ENCODE measurements at regions of chr4 and their contacts with region 1.

Region 1: DNA sequence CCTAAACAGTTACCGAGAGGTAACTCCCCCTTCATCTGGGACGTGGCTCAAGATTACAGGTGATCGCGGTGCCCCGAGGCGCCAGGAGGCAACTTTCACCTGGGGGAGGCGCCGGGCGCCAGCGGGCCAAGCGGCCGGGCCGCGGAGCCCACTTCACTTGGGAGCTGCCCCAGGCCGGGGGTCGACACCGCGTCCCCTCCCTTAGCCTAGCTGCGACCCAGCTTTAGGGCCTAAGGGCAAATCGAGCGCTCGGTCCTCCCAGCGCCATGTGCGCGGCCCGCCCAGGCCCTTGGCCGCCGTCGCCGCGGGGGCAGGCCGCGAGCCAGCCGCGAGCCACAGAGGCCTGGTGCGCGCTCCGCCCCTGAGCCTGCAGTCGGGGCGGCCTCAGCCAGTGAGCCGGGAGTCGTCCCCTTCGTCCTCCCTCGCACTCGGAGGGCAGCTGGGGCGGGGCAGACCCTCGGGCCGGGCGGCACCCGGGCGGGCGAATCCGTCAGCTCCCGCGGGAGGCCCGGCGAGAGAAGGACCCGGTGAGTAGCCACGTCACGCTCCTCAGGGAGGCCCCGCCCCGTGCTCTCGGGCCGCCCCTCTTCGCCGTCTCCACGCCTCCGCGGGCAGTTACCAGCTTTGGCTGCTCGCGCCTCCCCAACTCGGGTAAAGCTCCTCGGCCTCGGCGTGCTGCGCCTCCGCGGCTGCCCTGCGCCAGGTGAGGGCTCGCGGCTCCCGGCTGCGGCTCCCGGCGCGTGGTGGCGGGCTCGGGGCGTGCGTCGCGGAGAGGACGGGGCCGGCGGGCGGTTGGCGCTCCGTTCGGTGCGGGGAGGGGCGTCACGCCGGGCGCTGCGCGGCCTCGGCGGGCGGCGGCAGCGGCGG is at the start of gene LARP1B:
- DNase-seq: peak; percentile 87 to 95 (median 91)
- ATAC-seq: peak; percentile 90
- H3K4me3 ChIP-seq: peak within 1 kb of the TSS; percentile 55 to 73
- H3K4me3 Mint-ChIP-seq: peak within 1 kb of the TSS; percentile 84
- H3K27ac ChIP-seq: peak within 1 kb of the TSS; percentile 79 to 86
- H3K27ac Mint-ChIP-seq: peak within 1 kb of the TSS; percentile 92
- H3K4me1 ChIP-seq: peaks cover 5% of the 10 kb centered on the region
- H3K4me1 Mint-ChIP-seq: peaks cover 12% of the 10 kb centered on the region
- H3K27me3 ChIP-seq: no peaks in the 10 kb centered on the region
- H3K27me3 Mint-ChIP-seq: no peaks in the 10 kb centered on the region
- CTCF ChIP-seq: no peak
- total RNA-seq, gene LARP1B: 10.0 to 10.1 TPM

Region 2: GRCh38 chr4:127622921-127623656 is 437.8 kb before region 1 on chr4:
- CTCF ChIA-PET with region 1: no interaction called
- POLR2A ChIA-PET with region 1: no interaction called
- intact Hi-C with region 1: no loop called
- DNase-seq: peak in 1 of 9 experiments; percentile 1
- ATAC-seq: no peak
- H3K4me3 ChIP-seq: no peak overlapping the region
- H3K4me3 Mint-ChIP-seq: peak overlapping the region; percentile 49
- H3K27ac ChIP-seq: no peak overlapping the region
- H3K27ac Mint-ChIP-seq: no peak overlapping the region
- H3K4me1 ChIP-seq: no peaks in the 10 kb centered on the region
- H3K4me1 Mint-ChIP-seq: peaks cover 6% of the 10 kb centered on the region
- H3K27me3 ChIP-seq: peaks cover 5 to 8% of the 10 kb centered on the region in 2 experiments
- H3K27me3 Mint-ChIP-seq: peaks cover 46% of the 10 kb centered on the region
- CTCF ChIP-seq: no peak

Region 3: GRCh38 chr4:127880764-127881562 is 180.0 kb before region 1 on chr4 and contains the start of gene PLK4:
- CTCF ChIA-PET with region 1: no interaction called
- POLR2A ChIA-PET with region 1: interaction called, 7 read pairs
- intact Hi-C with region 1: loop called (anchors 1 to 2 kb)
- DNase-seq: peak; percentile 87 to 97 (median 94)
- ATAC-seq: peak; percentile 92
- H3K4me3 ChIP-seq: peak within 1 kb of the TSS; percentile 75 to 84
- H3K4me3 Mint-ChIP-seq: peak within 1 kb of the TSS; percentile 98
- H3K27ac ChIP-seq: peak within 1 kb of the TSS; percentile 71 to 87
- H3K27ac Mint-ChIP-seq: peak within 1 kb of the TSS; percentile 97
- H3K4me1 ChIP-seq: peaks cover 19% of the 10 kb centered on the region
- H3K4me1 Mint-ChIP-seq: peaks cover 23% of the 10 kb centered on the region
- H3K27me3 ChIP-seq: no peaks in the 10 kb centered on the region
- H3K27me3 Mint-ChIP-seq: no peaks in the 10 kb centered on the region
- CTCF ChIP-seq: no peak
- total RNA-seq, gene PLK4: 4.5 to 5.9 TPM

Region 4: DNA sequence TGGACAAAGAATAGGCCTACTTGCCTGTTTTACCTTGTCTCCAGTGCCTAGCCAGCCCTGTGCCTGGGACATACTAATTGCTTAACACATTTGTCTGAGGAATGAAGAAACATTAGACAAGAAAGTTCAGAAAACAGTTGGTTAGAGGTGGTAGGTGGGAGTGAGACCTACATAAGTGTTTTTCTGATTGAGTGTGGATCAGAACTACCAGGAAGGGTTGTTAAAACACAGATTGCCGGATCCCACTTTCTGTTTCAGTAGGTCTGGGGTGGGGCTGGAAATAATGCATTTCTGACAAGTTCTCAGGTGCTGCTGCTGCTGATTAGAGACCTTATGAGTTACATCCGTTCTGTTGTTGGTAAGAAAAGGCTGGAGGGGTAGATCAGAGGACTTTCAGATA is 742.9 kb after region 1 on chr4:
- CTCF ChIA-PET with region 1: no interaction called
- POLR2A ChIA-PET with region 1: no interaction called
- intact Hi-C with region 1: loop called in 1 of 2 experiments (anchors 5 kb)
- DNase-seq: peak in 1 of 9 experiments; percentile 52
- ATAC-seq: no peak
- H3K4me3 ChIP-seq: no peak overlapping the region
- H3K4me3 Mint-ChIP-seq: no peak overlapping the region
- H3K27ac ChIP-seq: peak overlapping the region in 1 of 2 experiments; percentile 58
- H3K27ac Mint-ChIP-seq: no peak overlapping the region
- H3K4me1 ChIP-seq: no peaks in the 10 kb centered on the region
- H3K4me1 Mint-ChIP-seq: no peaks in the 10 kb centered on the region
- H3K27me3 ChIP-seq: no peaks in the 10 kb centered on the region
- H3K27me3 Mint-ChIP-seq: no peaks in the 10 kb centered on the region
- CTCF ChIP-seq: no peak

Region 5: DNA sequence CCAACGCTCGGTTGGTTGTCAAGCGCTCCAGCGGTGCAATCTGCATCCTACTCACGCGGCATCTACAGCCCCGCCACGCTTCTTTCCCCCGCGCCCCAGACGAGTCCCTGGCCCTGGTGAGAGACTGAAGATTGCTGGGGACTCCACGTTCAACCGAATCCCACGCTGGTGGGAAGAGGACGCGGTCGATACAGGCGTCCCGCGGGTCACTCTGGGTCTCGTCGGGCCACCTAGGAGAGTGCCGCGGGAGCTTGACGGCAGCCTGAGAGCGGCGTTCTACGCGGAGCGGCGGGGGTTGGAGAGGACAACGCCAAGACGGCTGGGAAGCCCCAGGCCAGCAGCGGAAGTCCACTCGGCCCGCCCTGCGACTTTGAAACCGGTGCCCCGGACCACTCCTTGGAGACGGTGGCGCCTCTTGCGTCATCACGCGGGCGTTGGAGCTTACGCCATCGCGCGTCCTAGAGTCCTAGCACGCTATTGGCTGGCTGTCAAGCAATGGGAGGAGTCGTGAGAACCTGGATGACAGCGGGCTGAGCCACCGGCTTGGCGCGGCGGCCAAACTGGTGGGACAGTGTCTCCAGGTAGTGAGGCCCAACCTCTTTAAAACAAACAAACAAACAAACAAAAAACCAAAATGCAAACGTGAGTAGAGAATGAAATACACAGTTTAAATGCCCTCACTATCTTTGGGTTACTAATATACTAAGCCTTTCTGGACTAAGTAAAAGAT is 1032.4 kb after region 1 on chr4 and contains the start of gene SCLT1:
- CTCF ChIA-PET with region 1: no interaction called
- POLR2A ChIA-PET with region 1: no interaction called
- intact Hi-C with region 1: loop called (anchors 1 to 5 kb)
- DNase-seq: peak; percentile 88 to 99 (median 96)
- ATAC-seq: peak; percentile 92
- H3K4me3 ChIP-seq: peak within 1 kb of the TSS; percentile 87 to 94
- H3K4me3 Mint-ChIP-seq: peak within 1 kb of the TSS; percentile 24
- H3K27ac ChIP-seq: peak within 1 kb of the TSS; percentile 94 to 98
- H3K27ac Mint-ChIP-seq: no peak within 1 kb of the TSS
- H3K4me1 ChIP-seq: peaks cover 40% of the 10 kb centered on the region
- H3K4me1 Mint-ChIP-seq: peaks cover 49% of the 10 kb centered on the region
- H3K27me3 ChIP-seq: no peaks in the 10 kb centered on the region
- H3K27me3 Mint-ChIP-seq: no peaks in the 10 kb centered on the region
- CTCF ChIP-seq: no peak
- total RNA-seq, gene SCLT1: 19.8 to 21.7 TPM

Measured in CD8-positive, alpha-beta T cell (primary cell).